Activated CD4-positive, alpha-beta T cell treated with anti-CD3 and anti-CD28 coated beads for 36 hours (primary cell): ENCODE measurements at regions of chr11 and their contacts with region 1.

Region 1: GRCh38 chr11:111926505-111927391 is 8.0 kb downstream of the C11orf52 start:
- DNase-seq: peak; percentile 96
- ATAC-seq: peak; percentile 91
- H3K4me3 Mint-ChIP-seq: peak overlapping the region; percentile 75
- H3K27ac Mint-ChIP-seq: peak overlapping the region; percentile 92
- H3K4me1 Mint-ChIP-seq: peaks cover 18% of the 10 kb centered on the region
- H3K27me3 Mint-ChIP-seq: no peaks in the 10 kb centered on the region

Region 2: DNA sequence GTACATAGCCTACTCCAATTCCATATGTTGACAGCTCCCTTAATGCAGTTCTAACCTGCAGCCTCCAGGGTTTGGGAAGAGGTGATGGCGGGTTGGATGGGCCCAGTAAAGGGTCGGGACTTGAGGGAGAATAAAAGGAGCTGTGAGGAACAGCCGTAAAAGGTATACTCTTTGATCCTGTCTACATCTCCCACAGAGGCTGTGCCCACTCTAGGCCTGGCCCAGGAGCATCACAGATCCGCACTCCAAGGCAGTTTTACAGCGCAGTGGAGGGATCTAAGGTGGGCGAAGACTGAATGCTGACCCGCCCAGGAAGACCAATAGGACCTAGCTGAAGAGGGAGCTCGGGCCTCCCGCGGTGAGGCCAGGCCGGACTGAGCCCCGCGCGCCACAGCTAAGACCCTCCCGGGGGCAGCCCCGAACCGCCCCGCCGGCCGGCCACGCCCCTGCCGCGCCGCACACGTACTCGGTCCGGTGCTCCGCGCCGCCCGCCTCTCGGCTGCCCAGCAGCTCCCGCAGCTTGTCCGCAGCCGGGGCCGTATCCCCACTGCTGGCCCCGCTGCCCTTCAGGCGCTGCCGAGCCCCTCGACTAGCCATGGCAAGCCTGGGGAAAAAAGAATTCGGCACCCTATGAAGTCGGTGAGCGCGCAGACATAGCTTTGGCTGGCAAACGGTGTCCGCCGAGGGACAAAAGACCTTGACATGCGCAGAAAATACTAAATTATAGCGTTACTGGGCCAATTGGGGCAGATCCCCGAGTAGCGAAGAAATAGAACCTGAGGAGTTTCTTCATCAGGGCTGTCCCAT is 55.7 kb before region 1 on chr11 and contains the start of gene ALG9:
- CTCF ChIA-PET with region 1: interaction called, 7 read pairs
- POLR2A ChIA-PET with region 1: interaction called, 8 read pairs
- intact Hi-C with region 1: loop called (anchors 1 to 2 kb)
- DNase-seq: peak; percentile 94
- ATAC-seq: peak; percentile 87
- H3K4me3 Mint-ChIP-seq: peak within 1 kb of the TSS; percentile 95
- H3K27ac Mint-ChIP-seq: peak within 1 kb of the TSS; percentile 90
- H3K4me1 Mint-ChIP-seq: peaks cover 26% of the 10 kb centered on the region
- H3K27me3 Mint-ChIP-seq: no peaks in the 10 kb centered on the region
- total RNA-seq, gene ALG9: 30.4 to 41.2 TPM

Region 3: GRCh38 chr11:111938687-111939160 is 12.0 kb after region 1 on chr11:
- CTCF ChIA-PET with region 1: interaction called, 21 read pairs
- POLR2A ChIA-PET with region 1: interaction called, 14 read pairs
- intact Hi-C with region 1: no loop called
- DNase-seq: peak; percentile 66
- ATAC-seq: peak; percentile 89
- H3K4me3 Mint-ChIP-seq: peak overlapping the region; percentile 73
- H3K27ac Mint-ChIP-seq: peak overlapping the region; percentile 93
- H3K4me1 Mint-ChIP-seq: peaks cover 51% of the 10 kb centered on the region
- H3K27me3 Mint-ChIP-seq: no peaks in the 10 kb centered on the region

Region 4: DNA sequence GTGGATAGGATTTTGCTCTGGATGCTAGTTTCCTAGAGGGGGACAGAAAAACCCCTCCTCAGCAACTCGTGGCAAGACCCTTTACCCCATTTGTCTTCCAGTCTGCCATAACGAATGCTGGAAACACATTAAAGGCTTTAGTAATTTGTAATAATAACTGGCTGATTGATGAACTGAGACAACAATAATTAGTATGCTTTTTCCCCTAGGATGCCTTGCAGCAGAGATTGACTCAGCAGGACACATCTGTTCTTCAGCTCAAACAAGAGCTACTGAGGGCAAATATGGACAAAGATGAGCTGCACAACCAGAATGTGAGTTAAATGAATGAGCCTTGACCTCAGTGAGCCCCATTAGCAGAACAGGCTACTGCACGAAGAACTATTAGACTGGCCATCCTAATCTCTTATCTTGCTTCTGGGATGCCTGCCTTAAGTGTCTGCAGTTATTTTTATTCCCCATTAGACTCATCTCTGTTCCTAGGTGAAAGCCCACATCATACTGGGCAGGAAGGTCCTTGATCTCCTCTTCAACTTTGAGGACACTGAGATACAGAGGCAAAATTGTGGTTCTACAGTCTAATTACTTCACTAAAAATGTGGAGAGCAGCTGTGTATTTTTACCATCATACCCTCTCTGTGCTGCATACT is 65.6 kb after region 1 on chr11:
- CTCF ChIA-PET with region 1: interaction called, 10 read pairs
- POLR2A ChIA-PET with region 1: no interaction called
- intact Hi-C with region 1: no loop called
- DNase-seq: no peak
- ATAC-seq: no peak
- H3K4me3 Mint-ChIP-seq: no peak overlapping the region
- H3K27ac Mint-ChIP-seq: no peak overlapping the region
- H3K4me1 Mint-ChIP-seq: no peaks in the 10 kb centered on the region
- H3K27me3 Mint-ChIP-seq: no peaks in the 10 kb centered on the region

Region 5: DNA sequence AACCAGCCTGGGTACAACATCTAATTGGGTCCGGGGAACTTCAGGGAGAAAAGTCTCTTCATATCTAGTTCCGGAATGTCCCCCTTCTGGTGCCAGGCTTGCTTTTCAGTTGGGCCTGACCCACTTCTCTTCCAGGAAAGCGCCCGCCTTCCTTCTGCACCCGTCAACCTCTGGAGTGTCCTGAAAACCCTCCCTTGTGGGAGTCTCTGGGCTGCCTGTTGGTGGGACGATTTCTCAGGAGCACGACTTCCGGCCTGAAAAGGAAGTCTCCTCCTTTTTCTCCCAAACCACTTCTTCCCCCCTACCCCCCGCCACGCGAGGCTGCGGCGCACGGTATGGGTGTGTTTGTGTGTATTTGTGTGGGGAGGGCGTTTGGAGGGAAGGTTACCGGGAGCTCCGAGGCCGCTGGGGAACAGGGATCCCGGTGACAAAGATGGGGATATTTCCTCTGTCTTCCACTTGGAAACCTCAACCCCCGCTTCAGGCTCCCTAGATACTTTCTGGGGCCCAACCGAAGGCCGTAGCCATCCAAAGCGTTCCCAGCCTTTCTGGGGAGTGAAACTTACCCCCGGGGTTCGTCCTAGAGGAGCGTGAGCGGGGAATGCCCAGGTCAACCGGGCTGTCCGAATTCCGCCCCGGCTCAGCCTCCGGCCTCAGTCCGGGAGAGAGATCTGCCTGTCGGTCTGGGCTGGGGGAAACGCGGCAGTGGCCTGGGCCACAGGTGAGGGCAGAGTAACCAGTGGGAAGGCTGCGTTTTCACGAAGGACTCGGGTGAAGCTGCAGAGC is 147.5 kb after region 1 on chr11 and contains the start of gene NKAPD1:
- CTCF ChIA-PET with region 1: no interaction called
- POLR2A ChIA-PET with region 1: no interaction called
- intact Hi-C with region 1: loop called (anchors 1 kb)
- DNase-seq: peak; percentile 86
- ATAC-seq: peak; percentile 92
- H3K4me3 Mint-ChIP-seq: peak within 1 kb of the TSS; percentile 94
- H3K27ac Mint-ChIP-seq: peak within 1 kb of the TSS; percentile 93
- H3K4me1 Mint-ChIP-seq: peaks cover 26% of the 10 kb centered on the region
- H3K27me3 Mint-ChIP-seq: peaks cover 11% of the 10 kb centered on the region
- total RNA-seq, gene NKAPD1: 23.7 to 45.3 TPM

Region 6: DNA sequence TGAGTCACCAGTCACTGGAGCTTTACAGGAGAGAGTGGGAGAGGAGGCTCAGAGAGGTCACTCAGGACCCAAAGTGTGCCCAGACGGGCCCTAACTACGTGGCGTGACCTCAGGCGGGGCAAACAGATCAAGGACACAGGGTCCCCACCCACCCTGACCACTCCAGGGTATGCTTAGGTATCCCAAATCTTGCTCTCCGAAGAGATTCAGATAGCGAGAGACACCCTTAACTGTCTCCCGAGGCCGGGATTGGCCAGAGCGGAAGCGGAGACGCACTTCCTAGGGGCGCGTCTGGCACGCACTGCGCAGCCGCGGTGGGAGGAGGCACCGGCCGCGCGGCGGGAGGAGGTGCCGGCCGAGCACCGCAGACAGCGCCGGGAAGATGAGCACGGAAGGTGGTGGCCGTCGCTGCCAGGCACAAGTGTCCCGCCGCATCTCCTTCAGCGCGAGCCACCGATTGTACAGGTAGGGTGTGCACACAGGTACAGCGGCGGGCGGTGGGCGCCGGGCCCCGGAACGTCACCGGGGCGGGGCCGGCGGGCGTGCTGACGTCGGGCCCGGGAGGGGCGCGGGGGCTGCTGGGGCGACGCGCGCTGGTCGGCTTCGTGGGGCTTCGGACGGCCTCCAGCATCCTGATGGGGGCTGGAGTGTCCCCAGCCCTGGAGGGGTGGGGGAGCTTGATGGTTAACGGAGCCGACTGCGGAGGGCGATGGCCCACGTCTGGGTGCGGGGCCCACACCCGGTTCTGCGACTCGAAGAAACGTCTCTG is 299.5 kb after region 1 on chr11 and contains the start of gene PTS:
- CTCF ChIA-PET with region 1: no interaction called
- POLR2A ChIA-PET with region 1: no interaction called
- intact Hi-C with region 1: loop called in 1 of 2 experiments (anchors 5 kb)
- DNase-seq: peak; percentile 90
- ATAC-seq: peak; percentile 97
- H3K4me3 Mint-ChIP-seq: peak within 1 kb of the TSS; percentile 78
- H3K27ac Mint-ChIP-seq: peak within 1 kb of the TSS; percentile 94
- H3K4me1 Mint-ChIP-seq: peaks cover 19% of the 10 kb centered on the region
- H3K27me3 Mint-ChIP-seq: no peaks in the 10 kb centered on the region
- total RNA-seq, gene PTS: 17.4 to 23.8 TPM

Region 7: DNA sequence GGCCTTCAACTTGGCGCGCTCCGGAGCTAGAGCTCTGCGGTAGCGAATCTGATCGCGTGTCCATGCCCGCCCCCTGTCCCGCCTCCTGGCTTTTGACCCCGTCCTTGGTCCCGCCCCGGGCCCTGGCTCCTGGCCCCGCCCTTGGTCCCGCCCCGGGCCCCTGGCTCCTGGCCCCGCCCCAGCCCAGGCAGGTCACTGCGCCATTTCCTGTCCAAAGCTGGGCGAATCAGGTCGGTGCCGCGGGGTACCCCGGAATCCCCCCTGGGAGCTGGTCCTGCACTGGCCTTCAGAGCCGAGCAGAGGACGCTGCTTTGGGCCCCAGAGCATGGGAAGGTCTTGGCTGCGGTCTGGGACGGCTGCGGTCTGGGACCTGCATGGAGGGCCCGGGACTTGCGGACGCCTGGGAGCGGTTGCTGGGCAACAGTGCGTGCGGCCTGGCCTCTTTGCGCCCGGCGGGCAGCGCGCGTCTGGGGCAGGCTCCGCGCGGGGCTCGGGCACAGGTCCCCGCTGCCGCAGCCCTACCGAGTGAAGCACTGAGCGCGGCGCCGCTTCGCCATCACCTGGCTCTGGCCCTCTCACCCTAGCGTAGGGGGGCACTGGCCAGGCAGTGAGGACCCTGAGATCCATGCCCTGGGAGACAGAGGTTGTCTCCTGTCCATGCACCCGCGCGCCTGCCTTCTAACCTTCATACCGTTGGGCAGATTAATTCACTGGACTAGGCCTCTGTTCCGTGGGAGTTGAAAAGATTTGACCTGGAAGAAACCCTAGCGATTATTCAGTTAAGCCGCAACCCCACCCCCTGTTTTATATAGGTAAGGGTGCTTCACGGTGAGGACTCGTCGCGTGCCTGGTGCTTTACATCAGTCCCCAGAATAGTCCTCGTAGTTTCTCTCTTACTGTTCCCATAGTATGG is 1387.9 kb after region 1 on chr11 and contains the start of gene TTC12:
- CTCF ChIA-PET with region 1: no interaction called
- POLR2A ChIA-PET with region 1: no interaction called
- intact Hi-C with region 1: loop called in 1 of 2 experiments (anchors 1 kb)
- DNase-seq: peak; percentile 97
- ATAC-seq: peak; percentile 99
- H3K4me3 Mint-ChIP-seq: peak within 1 kb of the TSS; percentile 77
- H3K27ac Mint-ChIP-seq: peak within 1 kb of the TSS; percentile 82
- H3K4me1 Mint-ChIP-seq: peaks cover 24% of the 10 kb centered on the region
- H3K27me3 Mint-ChIP-seq: no peaks in the 10 kb centered on the region
- total RNA-seq, gene TTC12: 16.3 to 17.6 TPM